Activated CD4-positive, alpha-beta memory T cell treated with anti-CD3 and anti-CD28 coated beads for 36 hours (primary cell): ENCODE measurements at regions of chr16 and their contacts with region 1.

Region 1: DNA sequence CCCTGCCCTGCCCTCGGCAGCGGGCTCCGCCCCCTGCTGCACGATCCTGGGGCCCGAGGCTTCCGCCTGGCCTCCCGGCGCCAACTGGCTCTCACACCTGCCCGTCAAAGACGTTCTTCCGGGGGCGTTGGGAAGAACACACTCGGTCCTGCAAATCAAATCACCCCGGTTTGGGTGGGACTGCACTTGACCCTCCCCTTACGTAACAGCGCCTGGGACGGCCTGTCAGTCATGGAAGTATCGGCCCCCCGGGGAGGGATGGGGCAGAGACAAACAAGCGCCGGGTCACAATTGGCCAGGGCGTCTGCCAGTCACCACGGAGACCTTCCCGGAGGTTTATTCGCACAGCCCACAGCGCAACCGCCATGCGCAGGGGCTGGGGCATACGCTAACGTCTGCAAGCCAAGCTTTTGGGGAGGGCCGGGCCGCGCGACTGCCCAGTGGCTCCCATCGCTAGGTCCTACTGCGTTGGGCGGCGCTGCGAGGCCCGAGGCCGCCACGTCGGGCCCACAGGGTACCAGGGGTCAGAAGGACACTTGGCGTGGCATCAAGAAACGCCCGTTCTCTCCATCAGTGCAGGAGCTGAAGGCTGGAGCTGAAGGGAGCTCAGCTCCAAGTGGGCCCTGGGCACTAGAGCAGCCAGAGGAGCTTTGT is 388 bp upstream of the AKTIP start:
- DNase-seq: peak; percentile 100
- H3K4me3 Mint-ChIP-seq: peak overlapping the region; percentile 84
- H3K27ac Mint-ChIP-seq: peak overlapping the region; percentile 96
- H3K4me1 Mint-ChIP-seq: peaks cover 59% of the 10 kb centered on the region
- H3K27me3 Mint-ChIP-seq: no peaks in the 10 kb centered on the region

Region 2: GRCh38 chr16:53130159-53131049 is 373.0 kb before region 1 on chr16:
- CTCF ChIA-PET with region 1: no interaction called
- POLR2A ChIA-PET with region 1: interaction called, 3 read pairs
- intact Hi-C with region 1: loop called (anchors 1 kb)
- DNase-seq: peak; percentile 92
- H3K4me3 Mint-ChIP-seq: peak overlapping the region; percentile 74
- H3K27ac Mint-ChIP-seq: no peak overlapping the region
- H3K4me1 Mint-ChIP-seq: peaks cover 7% of the 10 kb centered on the region
- H3K27me3 Mint-ChIP-seq: no peaks in the 10 kb centered on the region

Region 3: DNA sequence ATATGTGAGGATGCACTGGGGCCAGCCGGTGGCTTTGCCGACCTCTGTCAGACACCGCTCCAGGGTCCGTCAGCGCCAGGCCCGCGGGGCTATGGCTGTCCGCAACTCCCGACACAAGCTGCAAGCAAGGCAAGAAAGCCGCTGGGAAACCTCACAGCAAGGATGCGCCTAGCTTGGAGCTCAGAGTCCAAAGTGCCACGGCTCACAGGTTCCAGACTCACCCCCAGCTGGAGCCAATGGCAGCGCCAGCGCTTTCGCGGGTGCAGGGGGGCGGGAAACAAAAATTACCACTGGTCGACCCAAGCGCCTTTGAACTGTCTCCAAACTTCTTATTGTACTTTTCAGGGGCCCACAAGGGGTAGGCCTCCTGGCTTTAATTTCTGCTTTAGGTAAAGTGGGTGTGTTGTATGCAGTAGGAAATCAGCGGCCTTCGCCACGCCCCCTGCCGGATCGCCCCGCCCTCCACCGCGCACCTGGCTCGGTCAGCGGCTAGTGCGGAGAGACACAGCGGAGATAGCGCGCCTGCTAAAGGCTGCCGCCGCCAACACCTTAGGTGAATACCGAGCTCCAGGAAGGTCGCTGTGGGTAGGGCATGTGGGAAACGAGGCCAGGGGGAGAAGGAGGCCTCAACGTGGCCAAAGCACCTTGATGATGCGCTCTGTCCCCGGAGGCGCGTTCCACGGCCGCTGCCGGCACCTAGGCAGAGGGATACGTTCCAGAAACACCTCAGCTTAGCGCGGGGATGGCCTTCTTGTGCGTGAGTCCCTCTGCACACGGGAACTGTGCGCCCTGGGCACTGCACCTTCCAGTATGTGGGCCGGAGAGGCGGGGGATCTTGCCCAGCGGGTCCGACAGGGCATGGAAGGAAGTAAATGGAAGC is 130.2 kb before region 1 on chr16:
- CTCF ChIA-PET with region 1: no interaction called
- POLR2A ChIA-PET with region 1: no interaction called
- intact Hi-C with region 1: loop called (anchors 5 kb)
- DNase-seq: peak; percentile 86
- H3K4me3 Mint-ChIP-seq: peak overlapping the region; percentile 78
- H3K27ac Mint-ChIP-seq: no peak overlapping the region
- H3K4me1 Mint-ChIP-seq: peaks cover 15% of the 10 kb centered on the region
- H3K27me3 Mint-ChIP-seq: no peaks in the 10 kb centered on the region

Region 4: GRCh38 chr16:53457670-53458069 is 45.7 kb before region 1 on chr16:
- CTCF ChIA-PET with region 1: no interaction called
- POLR2A ChIA-PET with region 1: interaction called, 4 read pairs
- intact Hi-C with region 1: loop called (anchors 1 kb)
- DNase-seq: peak; percentile 81
- H3K4me3 Mint-ChIP-seq: peak overlapping the region; percentile 56
- H3K27ac Mint-ChIP-seq: peak overlapping the region; percentile 87
- H3K4me1 Mint-ChIP-seq: peaks cover 84% of the 10 kb centered on the region
- H3K27me3 Mint-ChIP-seq: no peaks in the 10 kb centered on the region

Region 5: GRCh38 chr16:53518550-53519416 is 15.4 kb after region 1 on chr16:
- CTCF ChIA-PET with region 1: interaction called, 9 read pairs
- POLR2A ChIA-PET with region 1: interaction called, 10 read pairs
- intact Hi-C with region 1: loop called (anchors 1 kb)
- DNase-seq: peak; percentile 92
- H3K4me3 Mint-ChIP-seq: peak overlapping the region; percentile 73
- H3K27ac Mint-ChIP-seq: peak overlapping the region; percentile 84
- H3K4me1 Mint-ChIP-seq: peaks cover 46% of the 10 kb centered on the region
- H3K27me3 Mint-ChIP-seq: no peaks in the 10 kb centered on the region

Region 6: GRCh38 chr16:53703590-53704444 is 200.4 kb after region 1 on chr16 and contains the starts of genes FTO and RPGRIP1L:
- CTCF ChIA-PET with region 1: interaction called, 4 read pairs
- POLR2A ChIA-PET with region 1: no interaction called
- intact Hi-C with region 1: loop called (anchors 1 kb)
- DNase-seq: peak; percentile 99
- H3K4me3 Mint-ChIP-seq: peak within 1 kb of the TSS; percentile 99
- H3K27ac Mint-ChIP-seq: peak within 1 kb of the TSS; percentile 91
- H3K4me1 Mint-ChIP-seq: peaks cover 34% of the 10 kb centered on the region
- H3K27me3 Mint-ChIP-seq: no peaks in the 10 kb centered on the region
- total RNA-seq, gene FTO: 50.7 to 53.1 TPM
- total RNA-seq, gene RPGRIP1L: 6.2 to 6.5 TPM